Common myeloid progenitor, CD34-positive (primary cell): ENCODE measurements at regions of chr4 and their contacts with region 1.

Region 1: DNA sequence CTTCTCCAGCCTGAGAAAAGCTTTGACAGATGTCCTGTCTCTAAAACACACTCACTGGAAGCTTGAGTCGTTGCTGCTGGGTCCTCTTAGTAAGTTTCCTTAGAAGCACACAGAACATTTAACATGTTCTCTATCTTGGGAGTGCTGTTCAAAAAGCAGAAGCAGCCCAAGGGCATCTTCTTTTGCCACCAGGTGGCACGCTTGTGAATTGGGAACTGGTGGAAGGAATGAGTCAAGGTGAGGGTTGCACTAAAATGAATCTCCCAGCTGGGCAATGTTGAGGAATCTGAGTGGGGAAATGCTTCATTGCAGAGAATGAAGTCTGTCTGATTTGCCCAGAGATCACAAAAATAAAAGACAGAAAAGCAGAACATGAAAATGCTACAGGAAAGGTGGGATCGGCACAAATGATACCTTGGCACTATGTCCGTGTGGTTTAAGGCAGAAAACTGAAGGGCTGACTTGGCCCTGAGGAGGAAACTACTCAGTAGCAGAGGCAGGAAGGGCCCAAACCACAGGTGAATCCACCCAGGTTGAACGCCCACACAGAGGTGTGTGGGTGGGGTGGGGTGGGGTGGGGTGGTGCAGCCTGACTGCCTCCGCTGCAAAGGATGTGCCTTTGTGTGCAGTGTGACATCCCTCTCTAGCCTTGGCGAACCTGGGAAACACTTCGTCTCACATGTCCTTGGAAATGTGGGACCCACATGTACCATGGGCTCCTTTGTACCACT is 26.0 kb downstream of the KIT start:
- DNase-seq: peak; percentile 78 to 87 (median 85)
- H3K4me3 ChIP-seq: peak overlapping the region in 2 of 7 experiments; percentile 12 to 24
- H3K27ac ChIP-seq: peak overlapping the region in 1 of 2 experiments; percentile 21
- H3K4me1 ChIP-seq: peaks cover 19 to 71% (median 55%) of the 10 kb centered on the region in 4 experiments
- H3K27me3 ChIP-seq: no peaks in the 10 kb centered on the region

Region 2: GRCh38 chr4:54658252-54659093 is 25.3 kb before region 1 on chr4:
- CTCF ChIA-PET with region 1: interaction called, 71 read pairs
- POLR2A ChIA-PET with region 1: interaction called, 7 read pairs
- DNase-seq: peak; percentile 79 to 93 (median 91)
- H3K4me3 ChIP-seq: peak overlapping the region; percentile 77 to 99 (median 90)
- H3K27ac ChIP-seq: peak overlapping the region; percentile 78 to 87
- H3K4me1 ChIP-seq: peaks cover 9 to 57% (median 46%) of the 10 kb centered on the region in 4 experiments
- H3K27me3 ChIP-seq: peaks cover 0 to 4% (median 0%) of the 10 kb centered on the region in 5 experiments

Region 3: GRCh38 chr4:54696646-54697045 is 12.9 kb after region 1 on chr4:
- CTCF ChIA-PET with region 1: interaction called, 31 read pairs
- POLR2A ChIA-PET with region 1: no interaction called
- DNase-seq: no peak
- H3K4me3 ChIP-seq: no peak overlapping the region
- H3K27ac ChIP-seq: no peak overlapping the region
- H3K4me1 ChIP-seq: peaks cover 0 to 7% (median 5%) of the 10 kb centered on the region in 4 experiments
- H3K27me3 ChIP-seq: no peaks in the 10 kb centered on the region

Region 4: DNA sequence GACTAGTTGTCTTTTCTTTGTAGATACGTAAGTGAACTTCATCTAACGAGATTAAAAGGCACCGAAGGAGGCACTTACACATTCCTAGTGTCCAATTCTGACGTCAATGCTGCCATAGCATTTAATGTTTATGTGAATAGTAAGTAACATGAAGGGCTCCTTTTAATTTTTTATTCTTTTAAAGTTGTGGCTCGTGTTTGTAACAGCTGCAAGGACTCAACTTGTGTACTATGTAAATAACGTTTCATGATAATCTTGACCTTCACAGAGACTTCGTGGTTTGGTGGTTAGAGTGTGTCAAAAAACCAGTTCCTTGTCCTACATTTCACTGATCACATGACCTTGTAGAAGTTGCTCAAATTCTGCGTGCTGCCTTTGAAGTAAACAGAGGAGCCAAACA is 25.6 kb after region 1 on chr4:
- CTCF ChIA-PET with region 1: interaction called, 10 read pairs
- POLR2A ChIA-PET with region 1: no interaction called
- DNase-seq: peak; percentile 21 to 69 (median 50)
- H3K4me3 ChIP-seq: no peak overlapping the region
- H3K27ac ChIP-seq: no peak overlapping the region
- H3K4me1 ChIP-seq: peaks cover 3 to 36% (median 25%) of the 10 kb centered on the region in 4 experiments
- H3K27me3 ChIP-seq: no peaks in the 10 kb centered on the region